ENCODE measurements at regions of chr5 and their contacts with region 1.

Region 1: GRCh38 chr5:12652201-12652600 is 748.0 kb upstream of the CTNND2 start:
- DNase-seq: no peak
- H3K4me3 ChIP-seq: no peak overlapping the region
- H3K27ac ChIP-seq: no peak overlapping the region
- H3K4me1 ChIP-seq: no peaks in the 10 kb centered on the region
- H3K27me3 ChIP-seq: no peaks in the 10 kb centered on the region
- CTCF ChIP-seq: no peak
- EP300 ChIP-seq: no peak
- POLR2A ChIP-seq: peak in 1 of 2 experiments; percentile 24; a peak in 1 of 3 replicates
- RAD21 ChIP-seq: no peak

Region 2: GRCh38 chr5:12636209-12636608 is 16.0 kb before region 1 on chr5:
- CTCF ChIA-PET with region 1: no interaction called
- POLR2A ChIA-PET with region 1: interaction called, 11 read pairs
- DNase-seq: no peak
- H3K4me3 ChIP-seq: no peak overlapping the region
- H3K27ac ChIP-seq: no peak overlapping the region
- H3K4me1 ChIP-seq: no peaks in the 10 kb centered on the region
- H3K27me3 ChIP-seq: no peaks in the 10 kb centered on the region
- CTCF ChIP-seq: no peak
- EP300 ChIP-seq: no peak
- POLR2A ChIP-seq: no peak
- RAD21 ChIP-seq: no peak

Measured in H1 (cell line).